Breast epithelium (tissue), 4 donors: ENCODE measurements at regions of chr10 and their contacts with region 1.

Region 1: GRCh38 chr10:120131183-120131582 is 238.7 kb downstream of the SEC23IP start:
- DNase-seq: no peak
- H3K4me3 ChIP-seq: no peak overlapping the region
- H3K27ac ChIP-seq: no peak overlapping the region
- H3K4me1 ChIP-seq: no peaks in the 10 kb centered on the region
- H3K27me3 ChIP-seq: peaks cover 0 to 3% of the 10 kb centered on the region in 2 donors
- CTCF ChIP-seq: no peak
- POLR2A ChIP-seq: no peak

Region 2: GRCh38 chr10:120381931-120382330 is 250.7 kb after region 1 on chr10:
- intact Hi-C with region 1: loop called (anchors 5 kb)
- DNase-seq: no peak
- H3K4me3 ChIP-seq: no peak overlapping the region
- H3K27ac ChIP-seq: no peak overlapping the region
- H3K4me1 ChIP-seq: no peaks in the 10 kb centered on the region
- H3K27me3 ChIP-seq: no peaks in the 10 kb centered on the region
- CTCF ChIP-seq: no peak
- POLR2A ChIP-seq: no peak